ENCODE measurements at regions of chr5 and their contacts with region 1.

Region 1: DNA sequence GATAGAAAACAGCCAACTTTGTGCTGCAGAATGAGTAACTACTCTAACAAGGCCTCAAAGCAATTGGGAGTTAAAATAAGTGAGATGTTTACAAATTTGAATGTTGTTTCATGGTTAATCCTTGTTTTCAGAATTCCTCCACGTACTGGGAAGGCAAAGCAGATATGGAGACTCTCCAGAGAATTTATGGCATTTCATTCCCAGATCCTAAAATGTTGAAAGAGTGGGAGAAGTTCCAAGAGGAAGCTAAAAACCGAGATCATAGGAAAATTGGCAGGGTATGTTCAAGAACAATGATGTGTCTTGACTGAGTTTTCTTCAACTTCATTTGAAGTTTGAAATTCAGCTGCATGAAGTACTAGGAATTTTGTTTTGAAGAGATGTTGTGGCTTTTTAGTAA is 16.4 kb downstream of the TARS1 start:
- DNase-seq: no peak
- ATAC-seq: no peak
- H3K4me3 Mint-ChIP-seq: no peak overlapping the region
- H3K27ac Mint-ChIP-seq: no peak overlapping the region
- H3K4me1 Mint-ChIP-seq: peaks cover 2% of the 10 kb centered on the region
- H3K27me3 Mint-ChIP-seq: no peaks in the 10 kb centered on the region

Region 2: GRCh38 chr5:33440482-33441240 is 16.5 kb before region 1 on chr5 and contains the start of gene TARS1:
- CTCF ChIA-PET with region 1: interaction called, 4 read pairs
- POLR2A ChIA-PET with region 1: interaction called, 12 read pairs
- DNase-seq: peak; percentile 97
- ATAC-seq: peak; percentile 98
- H3K4me3 Mint-ChIP-seq: no peak within 1 kb of the TSS
- H3K27ac Mint-ChIP-seq: no peak within 1 kb of the TSS
- H3K4me1 Mint-ChIP-seq: peaks cover 34% of the 10 kb centered on the region
- H3K27me3 Mint-ChIP-seq: no peaks in the 10 kb centered on the region
- total RNA-seq, gene TARS1: 180 to 189 TPM

Measured in activated CD8-positive, alpha-beta T cell treated with anti-CD3 and anti-CD28 coated beads, Interleukin-2, amount 10 ng/mL, durations not matched to agents 7 days and 5 days (primary cell).